PC-9 (cell line): ENCODE measurements at regions of chr14 and their contacts with region 1.

Region 1: DNA sequence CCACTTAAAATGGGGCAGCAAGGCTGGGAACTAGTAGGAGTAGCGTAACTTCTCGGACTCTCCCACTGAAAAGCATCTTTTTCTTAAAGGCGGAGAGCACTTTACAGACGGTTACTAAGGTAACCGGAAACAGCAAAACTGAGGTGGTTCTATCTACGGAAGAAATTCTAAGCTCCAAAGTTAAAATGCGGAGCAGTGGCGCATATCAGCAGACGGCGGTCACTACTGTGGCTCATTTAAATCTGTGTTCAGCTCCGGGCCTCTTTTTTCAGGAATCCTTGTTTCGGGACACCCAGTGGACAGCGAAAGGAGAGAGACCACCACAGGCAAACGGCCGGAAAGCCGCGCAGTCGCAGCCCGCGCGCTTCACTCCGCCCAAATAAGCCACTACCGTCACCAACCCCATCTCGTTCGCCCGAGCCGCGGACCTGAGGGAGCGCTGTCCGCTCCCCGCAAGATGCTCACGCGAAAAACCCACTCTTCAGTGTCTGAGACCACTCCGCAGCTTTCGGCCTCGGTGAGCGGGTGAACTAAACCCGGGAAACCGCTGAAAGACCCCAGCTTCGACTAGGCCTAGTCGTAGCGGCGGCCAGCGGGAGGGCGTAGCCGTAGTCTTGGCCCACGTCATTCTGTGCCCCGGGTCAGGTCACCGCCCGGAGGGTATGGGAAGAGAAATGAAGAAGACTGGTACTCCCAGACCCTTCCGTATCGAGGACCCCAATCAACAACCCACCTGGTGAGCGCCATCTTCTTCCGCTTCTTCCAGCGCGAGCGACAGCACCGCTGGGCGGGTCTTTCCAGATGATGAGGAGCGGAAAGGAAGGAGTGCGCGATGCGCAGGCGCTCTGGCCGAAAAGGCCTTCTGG is at the start of gene SNW1:
- DNase-seq: peak; percentile 96
- H3K4me3 ChIP-seq: peak within 1 kb of the TSS; percentile 81
- H3K27ac ChIP-seq: peak within 1 kb of the TSS; percentile 38
- H3K4me1 ChIP-seq: peaks cover 21% of the 10 kb centered on the region
- H3K27me3 ChIP-seq: no peaks in the 10 kb centered on the region
- CTCF ChIP-seq: no peak
- total RNA-seq, gene SNW1: 154 and 233 TPM in 2 replicates

Region 2: DNA sequence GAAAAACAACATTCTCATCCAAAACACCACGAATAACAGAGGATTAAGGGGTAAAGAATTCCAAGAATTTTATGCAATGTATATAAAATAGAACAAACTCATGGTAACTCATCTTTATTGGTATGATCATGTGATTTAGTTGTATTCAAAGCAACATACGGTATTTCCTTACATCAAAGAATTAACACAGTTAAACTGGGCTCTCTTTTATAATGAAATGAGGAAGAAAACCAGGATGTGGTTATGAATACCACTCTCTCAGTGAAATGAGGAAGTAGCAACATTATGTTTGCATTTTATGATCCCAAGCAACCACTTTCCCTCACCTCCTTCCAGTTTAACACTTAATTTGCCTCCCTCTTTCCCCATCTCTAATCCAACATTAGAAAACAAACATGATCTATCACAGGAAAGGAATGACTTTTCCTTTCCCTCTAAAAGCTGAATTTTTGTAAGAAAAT is 167.1 kb before region 1 on chr14:
- CTCF ChIA-PET with region 1: no interaction called
- POLR2A ChIA-PET with region 1: interaction called, 25 read pairs
- intact Hi-C with region 1: no loop called
- DNase-seq: peak in 1 of 2 experiments; percentile 99
- H3K4me3 ChIP-seq: peak overlapping the region; percentile 5; the same call in 1 of the 2 replicates
- H3K27ac ChIP-seq: peak overlapping the region; percentile 77
- H3K4me1 ChIP-seq: peaks cover 53% of the 10 kb centered on the region
- H3K27me3 ChIP-seq: no peaks in the 10 kb centered on the region
- CTCF ChIP-seq: no peak

Region 3: GRCh38 chr14:77654001-77654441 is 106.6 kb before region 1 on chr14:
- CTCF ChIA-PET with region 1: no interaction called
- POLR2A ChIA-PET with region 1: no interaction called
- intact Hi-C with region 1: no loop called
- DNase-seq: no peak
- H3K4me3 ChIP-seq: no peak overlapping the region
- H3K27ac ChIP-seq: no peak overlapping the region
- H3K4me1 ChIP-seq: no peaks in the 10 kb centered on the region
- H3K27me3 ChIP-seq: no peaks in the 10 kb centered on the region
- CTCF ChIP-seq: no peak

Region 4: DNA sequence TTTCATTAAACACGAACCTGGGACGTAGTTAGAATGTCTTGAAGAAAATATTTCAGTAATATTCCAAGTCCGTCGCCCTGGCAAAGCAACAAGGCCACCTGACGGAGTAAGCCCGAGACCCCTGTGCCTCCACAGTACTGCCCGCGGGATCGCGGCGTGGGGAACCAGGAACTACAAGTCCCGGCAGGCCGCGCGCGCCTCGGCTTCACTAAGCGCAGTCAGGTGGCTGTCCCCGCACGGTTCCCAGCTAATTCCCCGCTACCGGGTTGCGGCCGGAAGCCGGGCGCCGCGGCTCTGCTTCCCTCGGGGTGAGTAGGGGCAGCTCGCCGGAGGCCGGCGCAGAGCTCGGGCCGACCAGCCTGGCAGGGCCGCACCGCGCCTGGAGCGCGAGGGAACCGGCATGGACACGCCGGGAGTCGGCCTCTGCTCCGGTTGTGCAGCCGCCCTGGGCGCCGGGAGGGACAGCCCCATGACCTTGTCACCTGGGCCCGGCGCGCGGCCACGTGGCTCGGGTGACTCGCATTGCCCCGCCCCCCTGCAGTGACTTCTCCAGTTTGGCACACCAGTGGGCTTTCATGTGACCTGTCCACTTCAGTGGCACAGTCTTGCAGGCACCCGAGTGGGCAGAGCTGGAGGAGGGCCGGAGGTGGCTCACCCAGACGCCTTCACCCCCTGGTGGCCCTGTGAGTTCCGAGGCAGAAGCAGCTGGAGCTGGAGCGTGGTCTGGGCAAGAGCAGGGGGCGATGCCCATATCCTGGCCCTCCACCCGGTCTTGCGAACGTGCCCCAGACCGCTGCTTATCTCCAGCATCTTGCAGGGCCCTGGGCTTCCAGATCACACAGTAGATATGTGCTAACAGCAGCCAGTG is 39.5 kb after region 1 on chr14 and contains the start of gene ADCK1:
- CTCF ChIA-PET with region 1: interaction called, 9 read pairs
- POLR2A ChIA-PET with region 1: interaction called, 4 read pairs
- intact Hi-C with region 1: loop called (anchors 1 kb)
- DNase-seq: peak; percentile 75 to 95
- H3K4me3 ChIP-seq: peak within 1 kb of the TSS; percentile 88
- H3K27ac ChIP-seq: peak within 1 kb of the TSS; percentile 58
- H3K4me1 ChIP-seq: peaks cover 21% of the 10 kb centered on the region
- H3K27me3 ChIP-seq: no peaks in the 10 kb centered on the region
- CTCF ChIP-seq: peak; percentile 55; the same call in 1 of the 2 replicates
- total RNA-seq, gene ADCK1: 19.0 and 26.3 TPM in 2 replicates

Region 5: DNA sequence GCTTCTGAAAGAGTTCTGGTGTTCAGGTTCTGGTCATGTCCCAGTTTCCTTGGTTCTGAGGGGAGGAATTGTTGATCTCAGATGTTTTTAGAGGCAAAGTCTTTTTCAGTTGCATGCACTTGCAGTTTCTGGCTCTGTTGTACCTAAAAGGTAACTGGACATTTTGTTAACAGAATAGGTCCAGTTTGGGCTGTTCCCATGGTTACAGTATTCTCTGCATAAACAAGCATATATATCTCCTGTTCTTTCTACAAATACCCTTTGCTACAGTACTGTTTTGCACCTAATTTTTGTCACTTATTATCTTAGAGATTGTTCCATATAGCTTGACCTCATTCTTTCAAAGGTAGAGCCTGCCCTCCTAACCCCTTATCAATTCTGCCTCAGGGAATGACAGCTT is 276.5 kb after region 1 on chr14:
- CTCF ChIA-PET with region 1: interaction called, 17 read pairs
- POLR2A ChIA-PET with region 1: no interaction called
- intact Hi-C with region 1: no loop called
- DNase-seq: no peak
- H3K4me3 ChIP-seq: no peak overlapping the region
- H3K27ac ChIP-seq: no peak overlapping the region
- H3K4me1 ChIP-seq: no peaks in the 10 kb centered on the region
- H3K27me3 ChIP-seq: peaks cover 92% of the 10 kb centered on the region
- CTCF ChIP-seq: no peak